ENCODE measurements at regions of chr9 and their contacts with region 1.

Region 1: GRCh38 chr9:121545875-121546423 is 46.3 kb upstream of the GGTA1 start:
- DNase-seq: peak; percentile 97
- H3K4me3 ChIP-seq: peak overlapping the region; percentile 11 to 47 (median 36)
- H3K27ac ChIP-seq: no peak overlapping the region
- H3K4me1 ChIP-seq: peaks cover 20 to 25% (median 22%) of the 10 kb centered on the region in 4 donors
- H3K27me3 ChIP-seq: no peaks in the 10 kb centered on the region
- CTCF ChIP-seq: peak; percentile 95 to 99 (median 97)
- EP300 ChIP-seq: no peak
- POLR2A ChIP-seq: no peak

Region 2: DNA sequence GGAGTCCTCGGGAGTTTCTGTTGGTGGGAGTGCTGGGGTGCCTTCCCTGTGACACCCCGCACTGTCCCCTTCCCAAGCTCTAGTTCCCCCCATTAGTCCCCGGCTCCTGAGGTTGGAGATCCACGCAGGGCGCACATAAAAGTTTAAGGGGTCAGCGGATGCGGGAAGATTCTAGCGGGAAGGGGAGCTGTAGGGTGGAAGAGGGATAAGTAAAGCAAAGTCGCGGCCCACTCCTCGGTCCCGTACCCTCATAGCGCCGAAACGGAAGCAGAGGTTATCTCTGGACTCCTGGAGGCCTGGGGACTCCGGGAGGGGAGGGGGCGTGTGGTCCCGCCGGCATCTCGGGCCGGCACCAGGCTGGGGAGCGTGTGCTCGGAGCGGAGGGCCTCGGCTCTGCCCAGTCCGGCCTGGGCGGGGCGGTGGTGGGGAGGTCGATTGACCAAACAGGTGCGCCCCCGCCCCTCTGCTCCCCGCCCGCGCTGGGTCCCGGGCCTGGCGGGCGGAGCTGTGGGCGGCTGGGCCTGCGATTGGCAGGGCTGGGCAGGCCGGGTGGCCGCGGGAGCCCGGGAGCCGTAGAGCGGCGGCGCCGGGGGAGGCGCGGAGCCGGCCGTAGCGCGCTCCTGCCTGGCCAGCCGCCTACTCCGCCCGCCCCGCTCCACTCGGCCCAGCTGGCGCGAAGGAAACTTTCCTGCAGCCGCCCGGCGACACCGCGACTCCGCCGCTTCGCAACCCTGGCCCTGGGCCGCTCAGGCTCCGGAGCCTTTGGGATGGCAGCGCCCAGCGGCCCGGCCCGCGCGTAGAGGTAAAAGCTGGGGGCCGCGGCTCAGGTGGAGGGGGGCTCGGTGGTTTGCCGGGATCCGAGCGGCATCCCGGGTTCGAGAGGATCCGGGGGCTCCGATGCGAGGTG is 53.3 kb after region 1 on chr9:
- intact Hi-C with region 1: loop called (anchors 5 kb)
- DNase-seq: no peak
- H3K4me3 ChIP-seq: peak overlapping the region; percentile 61 to 82 (median 70)
- H3K27ac ChIP-seq: peak overlapping the region; percentile 85 to 99 (median 92)
- H3K4me1 ChIP-seq: peaks cover 37 to 67% (median 60%) of the 10 kb centered on the region in 4 donors
- H3K27me3 ChIP-seq: no peaks in the 10 kb centered on the region
- CTCF ChIP-seq: no peak
- EP300 ChIP-seq: no peak
- POLR2A ChIP-seq: peak; percentile 56

Region 3: GRCh38 chr9:121619545-121620324 is 73.8 kb after region 1 on chr9:
- intact Hi-C with region 1: loop called (anchors 5 kb)
- DNase-seq: no peak
- H3K4me3 ChIP-seq: no peak overlapping the region
- H3K27ac ChIP-seq: peak overlapping the region; percentile 50 to 72 (median 65)
- H3K4me1 ChIP-seq: peaks cover 19 to 57% (median 54%) of the 10 kb centered on the region in 4 donors
- H3K27me3 ChIP-seq: no peaks in the 10 kb centered on the region
- CTCF ChIP-seq: no peak
- EP300 ChIP-seq: no peak
- POLR2A ChIP-seq: no peak

Region 4: DNA sequence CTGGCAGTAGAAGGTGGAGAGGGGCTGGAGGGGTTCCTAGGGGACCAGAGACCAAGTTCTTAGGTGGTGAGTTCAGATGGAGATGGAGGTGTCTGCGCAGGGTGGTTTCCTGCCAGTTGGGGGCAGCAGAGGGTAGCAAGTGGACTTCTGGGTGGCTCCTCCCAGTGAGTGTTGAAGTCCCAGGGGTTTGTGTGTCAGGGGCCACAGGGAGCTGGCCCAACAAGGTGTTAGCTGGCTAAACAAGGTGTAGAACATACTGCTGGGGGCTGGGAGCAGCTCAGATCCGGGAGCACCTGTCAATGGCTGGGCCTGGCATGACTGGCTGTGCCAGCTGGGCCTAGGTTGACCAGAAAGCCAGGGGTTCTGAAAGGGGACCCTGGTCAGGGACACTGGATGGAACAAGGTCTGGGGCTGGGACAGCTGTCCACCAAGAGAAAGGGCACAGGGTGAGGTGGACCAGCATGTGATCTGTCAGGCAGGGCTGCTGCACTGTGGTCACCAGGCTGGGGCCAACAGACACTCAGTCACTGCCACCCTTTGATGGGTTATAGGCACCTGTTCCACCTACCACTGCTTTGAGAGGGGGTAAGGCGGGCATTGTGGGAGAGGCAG is 141.1 kb after region 1 on chr9:
- intact Hi-C with region 1: loop called (anchors 5 kb)
- DNase-seq: no peak
- H3K4me3 ChIP-seq: no peak overlapping the region
- H3K27ac ChIP-seq: peak overlapping the region in 1 of 4 donors; percentile 47
- H3K4me1 ChIP-seq: peaks cover 26 to 53% (median 36%) of the 10 kb centered on the region in 4 donors
- H3K27me3 ChIP-seq: no peaks in the 10 kb centered on the region
- CTCF ChIP-seq: peak; percentile 75 to 90 (median 80)
- EP300 ChIP-seq: no peak
- POLR2A ChIP-seq: no peak

Region 5: DNA sequence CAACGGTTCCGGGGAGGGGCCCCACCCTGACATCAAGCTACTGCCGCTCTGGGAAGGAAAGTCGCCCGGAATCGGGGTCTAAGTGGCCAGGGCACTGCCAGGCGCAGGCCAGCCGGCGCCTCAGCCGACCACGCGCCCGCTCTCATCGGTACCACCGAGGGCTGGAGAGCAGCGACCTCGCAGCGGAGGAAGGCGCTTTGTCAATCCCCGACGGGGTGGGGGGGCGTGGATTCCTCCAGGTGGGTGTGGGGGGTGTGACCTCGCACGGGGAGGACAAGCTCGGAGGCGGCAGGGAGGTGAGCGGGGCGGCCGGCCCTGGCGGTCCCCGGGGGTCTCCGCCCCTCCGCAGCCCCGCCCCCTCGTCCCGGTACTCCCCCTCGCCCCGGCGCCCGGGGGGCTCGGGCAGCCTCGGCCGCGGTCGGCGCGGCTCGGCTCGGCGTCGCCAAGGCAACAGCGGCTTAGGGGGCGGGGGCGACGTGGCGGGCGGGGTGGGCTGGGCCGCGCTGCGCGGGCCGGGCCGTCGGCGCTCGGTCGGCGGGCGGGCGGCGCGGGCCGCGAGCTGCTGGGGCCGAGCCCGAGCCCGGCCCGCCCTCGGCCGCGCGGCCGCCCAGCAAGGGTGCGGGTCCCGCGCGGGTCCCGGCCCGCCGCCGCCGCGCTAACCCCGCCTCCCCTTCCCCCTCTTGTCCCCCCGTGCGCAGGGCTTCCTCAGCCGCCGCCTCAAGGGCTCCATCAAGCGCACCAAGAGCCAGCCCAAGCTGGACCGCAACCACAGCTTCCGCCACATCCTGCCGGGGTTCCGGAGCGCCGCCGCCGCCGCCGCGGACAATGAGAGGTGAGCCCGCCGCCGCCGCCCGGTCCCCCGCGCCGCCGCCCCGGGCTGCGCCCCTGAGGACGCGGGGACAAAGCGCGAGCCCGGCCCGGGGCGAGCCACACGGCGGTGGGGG is 152.9 kb after region 1 on chr9:
- intact Hi-C with region 1: loop called (anchors 5 kb)
- DNase-seq: no peak
- H3K4me3 ChIP-seq: peak overlapping the region; percentile 55 to 67 (median 64)
- H3K27ac ChIP-seq: peak overlapping the region; percentile 45 to 67 (median 64)
- H3K4me1 ChIP-seq: peaks cover 38 to 53% (median 41%) of the 10 kb centered on the region in 4 donors
- H3K27me3 ChIP-seq: no peaks in the 10 kb centered on the region
- CTCF ChIP-seq: no peak
- EP300 ChIP-seq: no peak
- POLR2A ChIP-seq: no peak

Region 6: GRCh38 chr9:121992571-121993212 is 446.7 kb after region 1 on chr9:
- intact Hi-C with region 1: loop called (anchors 2 kb)
- DNase-seq: peak; percentile 92
- H3K4me3 ChIP-seq: no peak overlapping the region
- H3K27ac ChIP-seq: no peak overlapping the region
- H3K4me1 ChIP-seq: peaks cover 4 to 14% (median 9%) of the 10 kb centered on the region in 4 donors
- H3K27me3 ChIP-seq: no peaks in the 10 kb centered on the region
- CTCF ChIP-seq: peak; percentile 82 to 86 (median 83)
- EP300 ChIP-seq: no peak
- POLR2A ChIP-seq: no peak

Measured in esophagus muscularis mucosa (tissue), 4 donors.